Mammary epithelial cell (primary cell): ENCODE measurements at regions of chr5 and their contacts with region 1.

Region 1: GRCh38 chr5:116532762-116533525 is 41.7 kb downstream of the SEMA6A start:
- DNase-seq: no peak
- H3K4me3 ChIP-seq: no peak overlapping the region
- H3K27ac ChIP-seq: no peak overlapping the region
- H3K4me1 ChIP-seq: no peaks in the 10 kb centered on the region
- H3K27me3 ChIP-seq: peaks cover 7% of the 10 kb centered on the region
- CTCF ChIP-seq: no peak

Region 2: GRCh38 chr5:116479776-116480675 is 52.9 kb before region 1 on chr5:
- CTCF ChIA-PET with region 1: no interaction called
- dilution Hi-C with region 1: loop called (anchors 10 kb)
- in situ Hi-C with region 1: no loop called
- intact Hi-C with region 1: no loop called
- DNase-seq: no peak
- H3K4me3 ChIP-seq: no peak overlapping the region
- H3K27ac ChIP-seq: no peak overlapping the region
- H3K4me1 ChIP-seq: peaks cover 8% of the 10 kb centered on the region
- H3K27me3 ChIP-seq: no peaks in the 10 kb centered on the region
- CTCF ChIP-seq: no peak